Ovary (tissue), 10 donors: ENCODE measurements at regions of chr3 and their contacts with region 1.

Region 1: GRCh38 chr3:37779289-37780152 is 82.2 kb upstream of the CTDSPL start:
- DNase-seq: peak in 1 of 5 donors; percentile 56
- H3K4me3 ChIP-seq: no peak overlapping the region
- H3K27ac ChIP-seq: no peak overlapping the region
- H3K4me1 ChIP-seq: no peaks in the 10 kb centered on the region
- H3K27me3 ChIP-seq: no peaks in the 10 kb centered on the region
- CTCF ChIP-seq: peak; percentile 66 to 76 (median 67)
- EP300 ChIP-seq: no peak
- POLR2A ChIP-seq: no peak

Region 2: GRCh38 chr3:37537914-37538691 is 241.4 kb before region 1 on chr3:
- intact Hi-C with region 1: loop called in 1 of 4 experiments (anchors 10 kb)
- DNase-seq: peak; percentile 58 to 71 (median 64)
- H3K4me3 ChIP-seq: no peak overlapping the region
- H3K27ac ChIP-seq: peak overlapping the region in 1 of 2 donors; percentile 34
- H3K4me1 ChIP-seq: peaks cover 8% of the 10 kb centered on the region
- H3K27me3 ChIP-seq: no peaks in the 10 kb centered on the region
- CTCF ChIP-seq: no peak
- EP300 ChIP-seq: no peak
- POLR2A ChIP-seq: no peak

Region 3: GRCh38 chr3:37819591-37819990 is 40.1 kb after region 1 on chr3:
- intact Hi-C with region 1: loop called in 1 of 4 experiments (anchors 5 kb)
- DNase-seq: no peak
- H3K4me3 ChIP-seq: no peak overlapping the region
- H3K27ac ChIP-seq: no peak overlapping the region
- H3K4me1 ChIP-seq: no peaks in the 10 kb centered on the region
- H3K27me3 ChIP-seq: no peaks in the 10 kb centered on the region
- CTCF ChIP-seq: no peak
- EP300 ChIP-seq: no peak
- POLR2A ChIP-seq: no peak

Region 4: GRCh38 chr3:39378088-39378487 is 1598.6 kb after region 1 on chr3:
- intact Hi-C with region 1: no loop called
- DNase-seq: peak in 3 of 5 donors; percentile 17 to 51 (median 32)
- H3K4me3 ChIP-seq: no peak overlapping the region
- H3K27ac ChIP-seq: no peak overlapping the region
- H3K4me1 ChIP-seq: no peaks in the 10 kb centered on the region
- H3K27me3 ChIP-seq: no peaks in the 10 kb centered on the region
- CTCF ChIP-seq: peak in 2 of 3 donors; percentile 25 to 47
- EP300 ChIP-seq: no peak
- POLR2A ChIP-seq: no peak